Activated CD4-positive, alpha-beta T cell treated with anti-CD3 and anti-CD28 coated beads for 36 hours (primary cell): ENCODE measurements at regions of chr18 and their contacts with region 1.

Region 1: DNA sequence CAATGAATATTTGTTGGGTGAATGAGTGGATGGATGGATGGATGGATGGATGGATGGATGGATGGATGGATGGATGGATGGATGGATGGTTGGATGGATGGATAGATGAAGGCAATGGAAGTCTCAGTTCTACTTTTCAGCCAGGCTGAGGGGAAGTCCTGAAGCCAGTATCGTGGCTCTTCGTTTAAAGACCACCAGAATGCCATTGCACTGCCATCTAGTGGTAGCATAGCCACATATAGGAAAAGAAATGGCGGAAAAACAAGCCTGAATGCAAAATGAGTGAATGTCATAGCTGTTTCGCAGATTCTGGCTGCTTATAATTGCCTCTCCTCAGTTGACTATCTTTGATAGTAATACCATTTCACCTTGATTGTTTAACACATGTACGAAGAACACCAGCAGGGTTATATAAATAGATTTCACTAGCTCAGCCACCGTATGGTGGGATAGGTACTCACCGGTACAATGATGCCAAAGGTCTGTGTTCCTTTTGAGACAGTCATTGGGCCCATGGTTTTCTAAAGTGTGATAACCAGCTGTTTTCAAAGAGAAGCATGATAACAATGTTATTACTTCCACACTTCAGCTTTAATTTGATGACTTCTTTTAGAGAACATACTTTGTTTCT is 62.3 kb upstream of the GREB1L start:
- DNase-seq: peak; percentile 66
- ATAC-seq: peak; percentile 71
- H3K4me3 Mint-ChIP-seq: no peak overlapping the region
- H3K27ac Mint-ChIP-seq: no peak overlapping the region
- H3K4me1 Mint-ChIP-seq: peaks cover 4% of the 10 kb centered on the region
- H3K27me3 Mint-ChIP-seq: no peaks in the 10 kb centered on the region

Region 2: GRCh38 chr18:20966795-20967194 is 212.9 kb before region 1 on chr18:
- CTCF ChIA-PET with region 1: interaction called, 3 read pairs
- POLR2A ChIA-PET with region 1: no interaction called
- intact Hi-C with region 1: loop called in 1 of 2 experiments (anchors 10 kb)
- DNase-seq: no peak
- ATAC-seq: no peak
- H3K4me3 Mint-ChIP-seq: no peak overlapping the region
- H3K27ac Mint-ChIP-seq: no peak overlapping the region
- H3K4me1 Mint-ChIP-seq: no peaks in the 10 kb centered on the region
- H3K27me3 Mint-ChIP-seq: no peaks in the 10 kb centered on the region

Region 3: DNA sequence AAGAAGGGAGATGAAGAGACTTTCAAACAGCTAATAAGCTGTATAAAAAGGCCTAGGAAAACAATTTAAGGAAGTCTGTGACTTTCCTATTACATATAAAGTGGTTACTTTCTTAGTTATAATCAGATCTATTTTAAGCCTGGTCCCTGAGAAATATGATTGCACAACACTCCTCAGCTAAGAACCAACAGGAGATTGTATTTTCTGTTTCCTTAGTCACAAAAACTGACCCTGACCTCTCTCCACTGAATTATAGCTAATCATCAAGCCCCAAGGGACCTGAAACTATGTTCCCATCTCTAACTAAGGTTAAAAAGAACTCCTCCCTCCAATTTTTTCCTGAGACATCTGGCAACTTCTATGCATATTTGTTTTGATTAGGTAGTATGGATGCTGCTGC is 175.0 kb before region 1 on chr18:
- CTCF ChIA-PET with region 1: interaction called, 4 read pairs
- POLR2A ChIA-PET with region 1: no interaction called
- intact Hi-C with region 1: loop called (anchors 5 to 10 kb)
- DNase-seq: no peak
- ATAC-seq: no peak
- H3K4me3 Mint-ChIP-seq: no peak overlapping the region
- H3K27ac Mint-ChIP-seq: no peak overlapping the region
- H3K4me1 Mint-ChIP-seq: peaks cover 9% of the 10 kb centered on the region
- H3K27me3 Mint-ChIP-seq: no peaks in the 10 kb centered on the region

Region 4: DNA sequence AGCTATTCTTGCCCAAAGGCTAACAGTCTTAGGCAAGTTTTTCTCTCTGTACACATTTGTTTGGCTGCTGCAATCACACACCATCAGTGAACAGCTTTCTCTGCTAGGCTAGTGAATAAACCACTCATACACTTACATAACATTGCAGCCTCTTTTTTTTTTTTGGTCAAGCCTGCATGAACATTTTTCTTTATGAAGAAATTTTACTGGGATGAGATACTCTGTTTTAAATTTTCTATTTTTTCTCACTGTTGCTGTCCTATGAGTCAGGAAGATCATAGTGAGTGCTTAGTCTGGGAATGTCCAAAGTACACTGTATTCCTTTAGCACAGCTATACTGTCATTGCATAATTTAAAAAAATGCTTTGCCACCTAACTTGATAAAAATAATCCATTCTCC is 126.6 kb before region 1 on chr18:
- CTCF ChIA-PET with region 1: interaction called, 3 read pairs
- POLR2A ChIA-PET with region 1: no interaction called
- intact Hi-C with region 1: loop called in 1 of 2 experiments (anchors 5 kb)
- DNase-seq: no peak
- ATAC-seq: no peak
- H3K4me3 Mint-ChIP-seq: no peak overlapping the region
- H3K27ac Mint-ChIP-seq: no peak overlapping the region
- H3K4me1 Mint-ChIP-seq: peaks cover 32% of the 10 kb centered on the region
- H3K27me3 Mint-ChIP-seq: no peaks in the 10 kb centered on the region

Region 5: DNA sequence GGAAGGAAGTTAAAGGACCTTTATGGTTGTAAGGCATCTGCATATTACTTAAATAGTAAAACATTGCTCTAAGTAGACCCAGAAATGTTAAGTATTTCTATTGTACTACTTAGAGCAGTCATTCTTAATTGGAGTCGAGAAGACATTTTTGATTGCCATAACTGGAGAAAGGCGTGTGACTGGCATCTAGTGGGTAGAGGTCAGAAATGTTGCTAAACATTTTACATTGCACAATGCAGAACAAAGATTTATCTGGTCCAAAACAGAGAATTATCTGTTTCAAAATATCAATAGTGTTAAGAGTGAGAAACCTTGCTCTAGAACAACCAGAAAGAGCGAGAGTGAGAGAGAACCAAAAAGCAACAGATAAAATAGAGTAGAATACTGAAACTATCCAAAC is 44.8 kb before region 1 on chr18:
- CTCF ChIA-PET with region 1: interaction called, 7 read pairs
- POLR2A ChIA-PET with region 1: no interaction called
- intact Hi-C with region 1: loop called (anchors 5 kb)
- DNase-seq: peak; percentile 29
- ATAC-seq: no peak
- H3K4me3 Mint-ChIP-seq: no peak overlapping the region
- H3K27ac Mint-ChIP-seq: no peak overlapping the region
- H3K4me1 Mint-ChIP-seq: no peaks in the 10 kb centered on the region
- H3K27me3 Mint-ChIP-seq: no peaks in the 10 kb centered on the region

Region 6: DNA sequence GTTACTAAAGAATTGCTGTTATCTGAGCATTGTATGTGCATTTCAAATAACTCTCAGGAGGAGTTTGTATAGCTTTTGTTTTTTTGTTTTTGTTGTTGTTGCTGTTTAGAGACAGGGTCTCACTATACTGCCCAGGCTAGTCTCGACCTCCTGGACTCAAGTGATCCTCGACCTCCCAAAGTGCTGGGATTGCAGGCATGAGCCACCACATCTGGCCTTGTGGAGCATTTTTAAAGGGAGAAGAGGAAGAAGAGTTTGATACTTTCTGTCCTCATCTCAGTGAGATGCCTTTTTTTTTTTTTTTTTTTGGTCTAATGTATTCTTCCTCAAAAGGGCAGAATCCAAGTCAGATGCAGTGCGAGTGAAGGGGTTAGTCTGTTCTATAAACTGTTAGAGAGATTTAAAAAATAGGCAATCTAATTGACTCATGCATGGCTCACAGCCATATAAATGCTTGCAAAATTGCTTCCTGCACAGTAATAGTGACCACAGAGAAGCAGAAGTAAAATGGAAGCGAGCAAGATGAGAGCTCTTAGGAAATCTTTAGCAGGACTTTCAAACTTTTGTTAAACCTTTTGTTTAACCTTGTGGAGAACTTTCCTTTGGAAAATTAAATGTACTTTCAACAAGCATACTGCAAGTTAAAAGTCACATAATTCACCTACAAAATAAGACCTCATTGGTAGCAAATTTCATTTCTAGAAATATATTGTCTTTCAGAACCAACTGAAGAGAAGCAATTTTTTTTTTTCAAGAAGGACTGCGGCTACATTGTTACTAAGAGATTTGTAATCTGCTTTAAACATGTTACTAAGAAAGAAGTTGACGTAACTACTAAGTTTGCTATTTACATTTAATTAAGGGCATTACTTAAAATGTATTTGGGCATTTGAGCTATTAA is 15.8 kb before region 1 on chr18:
- CTCF ChIA-PET with region 1: interaction called, 14 read pairs
- POLR2A ChIA-PET with region 1: no interaction called
- intact Hi-C with region 1: no loop called
- DNase-seq: no peak
- ATAC-seq: no peak
- H3K4me3 Mint-ChIP-seq: no peak overlapping the region
- H3K27ac Mint-ChIP-seq: no peak overlapping the region
- H3K4me1 Mint-ChIP-seq: no peaks in the 10 kb centered on the region
- H3K27me3 Mint-ChIP-seq: peaks cover 3% of the 10 kb centered on the region